ENCODE measurements at regions of chr19 and their contacts with region 1.

Region 1: GRCh38 chr19:7680606-7681339 is at the start of gene TRAPPC5:
- DNase-seq: peak; percentile 93
- ATAC-seq: peak; percentile 25
- H3K4me3 Mint-ChIP-seq: peak within 1 kb of the TSS; percentile 91
- H3K27ac Mint-ChIP-seq: peak within 1 kb of the TSS; percentile 91
- H3K4me1 Mint-ChIP-seq: peaks cover 51% of the 10 kb centered on the region
- H3K27me3 Mint-ChIP-seq: peaks cover 18% of the 10 kb centered on the region
- total RNA-seq, gene TRAPPC5: 90.2 to 95.2 TPM

Region 2: DNA sequence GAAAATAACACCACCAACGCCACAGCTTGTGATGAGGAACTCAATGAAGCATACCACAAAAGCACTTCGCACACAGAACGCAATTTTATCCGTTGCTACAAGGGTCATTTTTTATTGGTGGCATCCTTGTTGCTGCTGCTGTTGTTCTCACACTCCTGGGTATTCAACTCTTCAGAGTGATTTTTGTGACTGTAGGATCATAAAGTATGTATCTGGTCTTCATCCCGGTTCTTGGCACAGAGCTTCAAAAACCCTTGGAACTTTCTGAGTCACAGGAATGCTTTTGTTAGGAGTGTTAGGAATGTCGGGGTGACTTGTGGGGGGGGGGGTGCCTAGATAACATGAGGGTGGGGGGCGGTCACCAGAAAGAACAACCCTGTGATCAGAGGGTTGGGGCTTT is 502.8 kb before region 1 on chr19:
- CTCF ChIA-PET with region 1: no interaction called
- POLR2A ChIA-PET with region 1: no interaction called
- intact Hi-C with region 1: no loop called
- DNase-seq: no peak
- ATAC-seq: no peak
- H3K4me3 Mint-ChIP-seq: no peak overlapping the region
- H3K27ac Mint-ChIP-seq: no peak overlapping the region
- H3K4me1 Mint-ChIP-seq: peaks cover 18% of the 10 kb centered on the region
- H3K27me3 Mint-ChIP-seq: peaks cover 12% of the 10 kb centered on the region

Region 3: GRCh38 chr19:7535035-7535992 is 145.5 kb before region 1 on chr19 and contains the start of gene PNPLA6:
- CTCF ChIA-PET with region 1: interaction called, 3 read pairs
- POLR2A ChIA-PET with region 1: no interaction called
- intact Hi-C with region 1: loop called in 1 of 2 experiments (anchors 1 kb)
- DNase-seq: peak; percentile 97
- ATAC-seq: peak; percentile 80
- H3K4me3 Mint-ChIP-seq: peak within 1 kb of the TSS; percentile 91
- H3K27ac Mint-ChIP-seq: peak within 1 kb of the TSS; percentile 84
- H3K4me1 Mint-ChIP-seq: peaks cover 20% of the 10 kb centered on the region
- H3K27me3 Mint-ChIP-seq: no peaks in the 10 kb centered on the region
- total RNA-seq, gene PNPLA6: 82.2 to 108 TPM

Region 4: GRCh38 chr19:7636691-7637373 is 43.9 kb before region 1 on chr19 and contains the start of gene STXBP2:
- CTCF ChIA-PET with region 1: interaction called, 7 read pairs
- POLR2A ChIA-PET with region 1: no interaction called
- intact Hi-C with region 1: loop called in 1 of 2 experiments (anchors 1 kb)
- DNase-seq: peak; percentile 96
- ATAC-seq: peak; percentile 97
- H3K4me3 Mint-ChIP-seq: peak within 1 kb of the TSS; percentile 78
- H3K27ac Mint-ChIP-seq: peak within 1 kb of the TSS; percentile 86
- H3K4me1 Mint-ChIP-seq: peaks cover 22% of the 10 kb centered on the region
- H3K27me3 Mint-ChIP-seq: no peaks in the 10 kb centered on the region
- total RNA-seq, gene STXBP2: 75.2 to 83.0 TPM

Region 5: DNA sequence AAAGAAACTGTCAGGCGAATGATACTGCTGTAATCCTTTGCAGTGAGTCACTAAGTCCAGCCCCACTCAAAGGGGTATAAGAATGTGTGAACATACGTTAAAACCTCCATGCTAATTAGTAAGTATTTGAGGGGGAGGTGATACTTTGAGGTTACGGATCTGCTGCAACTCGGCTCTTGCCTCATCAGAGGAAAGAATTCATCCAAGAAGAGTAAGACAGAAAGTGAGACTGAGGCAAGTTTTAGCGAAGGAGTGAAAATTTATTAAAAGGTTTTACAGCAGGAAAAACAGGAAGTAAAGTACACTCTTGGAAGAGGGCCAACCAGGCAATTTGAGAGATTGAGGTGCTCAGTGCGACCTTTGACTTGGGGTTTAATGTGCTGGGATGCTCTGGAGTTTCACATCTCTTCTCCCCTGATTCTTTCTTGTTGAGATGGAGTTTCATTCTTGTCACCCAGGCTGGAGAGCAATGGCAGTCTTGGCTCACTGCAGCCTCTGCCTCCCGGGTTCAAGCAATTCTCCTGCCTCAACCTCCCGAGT is 92.0 kb after region 1 on chr19:
- CTCF ChIA-PET with region 1: interaction called, 5 read pairs
- POLR2A ChIA-PET with region 1: no interaction called
- intact Hi-C with region 1: loop called in 1 of 2 experiments (anchors 1 kb)
- DNase-seq: peak; percentile 64
- ATAC-seq: peak; percentile 97
- H3K4me3 Mint-ChIP-seq: peak overlapping the region; percentile 13
- H3K27ac Mint-ChIP-seq: peak overlapping the region; percentile 85
- H3K4me1 Mint-ChIP-seq: peaks cover 27% of the 10 kb centered on the region
- H3K27me3 Mint-ChIP-seq: peaks cover 31% of the 10 kb centered on the region

Region 6: DNA sequence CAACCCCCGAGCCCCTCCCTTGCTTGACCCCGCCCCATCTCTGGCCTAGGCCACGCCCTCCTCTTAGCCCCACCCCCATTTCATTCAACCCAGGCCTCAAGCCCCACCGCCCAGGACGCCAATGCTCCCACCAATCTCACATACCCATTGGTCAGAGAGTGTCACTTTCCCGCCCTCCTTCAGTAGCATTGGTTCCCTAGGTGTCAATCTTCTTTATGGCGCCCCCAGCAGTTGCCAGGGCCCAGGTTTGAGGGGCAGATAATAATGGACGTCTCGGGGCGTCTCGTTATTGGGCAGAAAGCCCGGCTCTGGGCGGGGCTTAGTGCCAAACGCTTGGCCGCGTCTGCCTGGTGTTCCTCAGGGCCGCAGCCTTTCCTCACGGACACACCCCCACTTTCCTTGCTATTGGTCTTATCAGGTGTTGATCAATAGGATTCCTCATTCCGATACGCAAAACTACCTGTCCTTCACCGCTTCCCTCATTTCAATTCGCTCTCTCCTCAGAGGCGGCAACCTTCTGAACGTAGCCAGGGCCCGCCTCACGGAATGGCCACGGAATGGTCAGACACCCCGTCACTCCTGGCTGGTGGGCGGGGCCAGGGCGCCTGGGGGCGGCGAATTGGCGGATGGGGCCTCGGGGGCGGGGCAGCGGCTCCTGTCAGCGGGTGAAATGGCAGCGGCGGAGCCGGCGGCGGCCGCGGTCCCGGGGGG is 148.9 kb after region 1 on chr19 and contains the start of gene EVI5L:
- CTCF ChIA-PET with region 1: no interaction called
- POLR2A ChIA-PET with region 1: no interaction called
- intact Hi-C with region 1: loop called in 1 of 2 experiments (anchors 1 kb)
- DNase-seq: peak; percentile 100
- ATAC-seq: peak; percentile 91
- H3K4me3 Mint-ChIP-seq: peak within 1 kb of the TSS; percentile 83
- H3K27ac Mint-ChIP-seq: peak within 1 kb of the TSS; percentile 94
- H3K4me1 Mint-ChIP-seq: peaks cover 14% of the 10 kb centered on the region
- H3K27me3 Mint-ChIP-seq: peaks cover 2% of the 10 kb centered on the region
- total RNA-seq, gene EVI5L: 4.8 to 5.9 TPM

Region 7: DNA sequence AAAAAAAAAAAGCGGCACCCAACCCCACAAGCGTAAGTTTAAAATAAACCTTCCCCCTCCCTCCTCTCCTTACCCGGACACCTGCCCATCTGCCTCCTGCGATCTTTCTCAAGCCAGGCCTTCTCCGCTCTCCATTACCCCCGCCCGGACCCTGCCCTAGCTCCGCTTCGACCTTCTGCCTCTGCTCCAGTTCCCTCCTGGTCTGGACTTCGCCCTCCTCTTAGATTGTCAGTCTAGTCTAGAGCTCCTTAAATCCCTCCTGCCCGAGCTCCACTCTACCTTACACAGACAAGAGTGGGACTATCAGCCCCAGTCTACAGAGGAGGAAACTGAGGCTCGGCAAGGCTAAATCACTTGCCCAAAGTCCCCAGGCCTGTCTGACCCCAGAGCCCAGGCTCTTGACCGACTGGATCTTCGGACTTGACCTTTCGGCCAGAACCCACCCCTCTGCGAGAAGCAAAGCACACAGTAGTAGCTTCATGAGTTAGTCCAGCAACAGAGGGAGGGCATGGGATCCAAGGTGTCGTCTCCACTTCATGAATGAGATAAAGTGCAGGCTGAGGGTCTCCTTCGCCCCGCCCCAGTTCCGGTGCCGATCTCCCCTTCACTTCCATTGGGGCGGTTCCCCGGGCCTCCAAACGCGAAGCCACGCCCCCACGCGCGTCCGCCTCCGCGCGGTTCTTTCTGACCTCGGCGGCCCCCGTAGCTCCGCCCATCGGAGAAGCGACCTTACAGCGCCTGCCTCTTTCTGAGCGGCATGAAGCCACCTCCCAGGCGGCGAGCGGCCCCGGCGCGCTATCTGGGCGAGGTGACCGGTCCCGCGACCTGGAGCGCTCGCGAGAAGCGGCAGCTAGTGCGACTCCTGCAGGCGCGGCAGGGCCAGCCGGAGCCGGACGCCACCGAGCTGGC is 239.1 kb after region 1 on chr19 and contains the start of gene SNAPC2:
- CTCF ChIA-PET with region 1: no interaction called
- POLR2A ChIA-PET with region 1: no interaction called
- intact Hi-C with region 1: loop called in 1 of 2 experiments (anchors 1 kb)
- DNase-seq: peak; percentile 98
- ATAC-seq: peak; percentile 76
- H3K4me3 Mint-ChIP-seq: peak within 1 kb of the TSS; percentile 82
- H3K27ac Mint-ChIP-seq: peak within 1 kb of the TSS; percentile 87
- H3K4me1 Mint-ChIP-seq: peaks cover 32% of the 10 kb centered on the region
- H3K27me3 Mint-ChIP-seq: peaks cover 20% of the 10 kb centered on the region
- total RNA-seq, gene SNAPC2: 14.6 to 16.2 TPM